Left colon (tissue), 2 donors: ENCODE measurements at regions of chr10 and their contacts with region 1.

Region 1: DNA sequence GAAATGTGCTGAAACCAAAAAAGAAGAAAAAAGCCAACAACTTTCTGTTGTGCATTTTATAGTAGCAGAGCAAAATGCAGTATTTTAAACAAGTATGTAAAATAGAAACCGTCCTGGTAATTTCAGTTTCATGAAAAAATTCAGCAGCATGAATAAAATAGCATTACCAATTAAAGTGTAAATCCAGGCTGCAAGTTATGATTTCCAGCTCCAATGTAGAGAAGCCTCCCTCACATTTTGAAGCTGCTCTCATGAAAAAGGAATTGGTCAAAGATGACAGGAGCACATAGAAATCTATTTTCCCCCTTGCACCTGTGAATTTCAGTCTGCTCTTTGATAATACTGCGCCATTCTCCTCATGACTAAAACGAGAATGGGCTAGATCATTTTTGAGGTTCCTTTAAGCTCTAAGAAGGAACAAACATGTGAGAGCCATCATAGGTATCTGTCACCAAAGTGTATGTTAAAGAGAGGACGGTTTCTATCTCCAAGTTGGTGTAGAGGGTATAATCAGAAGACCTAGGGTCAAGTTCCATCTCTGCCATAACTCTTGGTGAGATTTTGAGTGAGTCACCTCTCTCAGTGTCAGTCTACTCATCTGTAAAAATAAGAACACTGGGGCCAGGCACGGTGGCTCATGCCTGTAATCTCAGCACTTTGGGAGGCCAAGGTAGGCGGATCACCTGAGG is 107.5 kb downstream of the MTPAP start:
- DNase-seq: no peak
- ATAC-seq: no peak

Region 2: GRCh38 chr10:29998142-29998808 is 243.3 kb before region 1 on chr10:
- intact Hi-C with region 1: loop called in 1 of 2 experiments (anchors 5 kb)
- DNase-seq: peak; percentile 57 to 71
- ATAC-seq: peak; percentile 84